ENCODE measurements at regions of chr3 and their contacts with region 1.

Region 1: GRCh38 chr3:134485718-134486576 is at the starts of genes ANAPC13 and CEP63:
- DNase-seq: peak; percentile 88 to 97
- ATAC-seq: peak; percentile 91 to 97 (median 94)
- H3K4me3 ChIP-seq: peak within 1 kb of the TSS; percentile 71 to 94 (median 79)
- H3K27ac ChIP-seq: peak within 1 kb of the TSS; percentile 93 to 99 (median 96)
- H3K4me1 ChIP-seq: peaks cover 11 to 53% (median 40%) of the 10 kb centered on the region in 9 donors
- H3K27me3 ChIP-seq: no peaks in the 10 kb centered on the region
- CTCF ChIP-seq: no peak
- total RNA-seq, gene ANAPC13: 68.2 to 119 (median 84.0) TPM
- total RNA-seq, gene CEP63: 27.6 to 38.8 (median 31.0) TPM

Region 2: DNA sequence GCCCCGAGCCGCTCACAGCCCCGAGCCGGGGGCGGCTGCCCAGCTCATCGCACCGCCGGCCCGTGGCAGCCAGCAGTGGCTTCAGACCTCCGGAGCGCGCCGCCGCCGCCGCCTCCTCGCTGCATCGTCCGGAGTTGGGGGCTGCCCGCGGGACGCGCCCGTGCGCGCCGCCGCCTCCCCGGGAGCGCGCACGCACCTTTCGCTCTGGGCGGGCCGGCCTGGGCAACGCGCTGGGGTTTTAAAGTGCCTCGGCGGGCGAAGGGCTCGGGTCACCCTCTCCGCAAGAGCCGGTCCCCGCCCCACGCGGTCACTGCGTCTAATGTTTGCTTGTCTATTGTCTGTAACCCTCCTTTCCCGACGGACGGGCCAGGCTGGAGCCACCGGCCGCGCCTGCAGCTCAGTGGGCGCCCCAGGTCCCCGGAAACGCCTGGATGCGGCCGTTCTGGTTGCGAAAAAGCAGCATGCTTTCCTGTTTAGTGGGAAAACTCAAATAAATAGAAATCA is 235.2 kb before region 1 on chr3 and contains the start of gene RYK:
- intact Hi-C with region 1: loop called in 1 of 10 experiments (anchors 5 kb)
- DNase-seq: peak; percentile 74 to 86
- ATAC-seq: peak; percentile 92 to 96 (median 95)
- H3K4me3 ChIP-seq: peak within 1 kb of the TSS; percentile 64 to 84 (median 74)
- H3K27ac ChIP-seq: peak within 1 kb of the TSS; percentile 40 to 96 (median 90)
- H3K4me1 ChIP-seq: peaks cover 3 to 62% (median 41%) of the 10 kb centered on the region in 9 donors
- H3K27me3 ChIP-seq: no peaks in the 10 kb centered on the region
- CTCF ChIP-seq: no peak
- total RNA-seq, gene RYK: 33.8 to 45.8 (median 37.5) TPM

Region 3: GRCh38 chr3:134317106-134317947 is 168.6 kb before region 1 on chr3:
- intact Hi-C with region 1: no loop called
- DNase-seq: no peak
- ATAC-seq: no peak
- H3K4me3 ChIP-seq: no peak overlapping the region
- H3K27ac ChIP-seq: no peak overlapping the region
- H3K4me1 ChIP-seq: peaks cover 11 to 42% (median 37%) of the 10 kb centered on the region in 9 donors
- H3K27me3 ChIP-seq: peaks cover 0 to 19% (median 0%) of the 10 kb centered on the region in 7 donors
- CTCF ChIP-seq: no peak

Measured in heart right ventricle (tissue), 16 donors.